Activated T-helper 1 cell treated with anti-CD3 and anti-CD28 coated beads, Interleukin-12 subunit alpha, Interleukin-12 subunit beta, Interleukin-2, Interleukin-4 antibody, amounts not matched to agents 30 ng/mL and 10 ng/mL and 1 ng/mL, durations not matched to agents 14 hours and 24 hours and 36 hours (primary cell): ENCODE measurements at regions of chr11 and their contacts with region 1.

Region 1: GRCh38 chr11:61061081-61061826 is 41.0 kb upstream of the CD5 start:
- DNase-seq: peak; percentile 76
- H3K4me3 Mint-ChIP-seq: peak overlapping the region; percentile 70
- H3K27ac Mint-ChIP-seq: peak overlapping the region; percentile 88
- H3K4me1 Mint-ChIP-seq: peaks cover 77% of the 10 kb centered on the region
- H3K27me3 Mint-ChIP-seq: no peaks in the 10 kb centered on the region

Region 2: DNA sequence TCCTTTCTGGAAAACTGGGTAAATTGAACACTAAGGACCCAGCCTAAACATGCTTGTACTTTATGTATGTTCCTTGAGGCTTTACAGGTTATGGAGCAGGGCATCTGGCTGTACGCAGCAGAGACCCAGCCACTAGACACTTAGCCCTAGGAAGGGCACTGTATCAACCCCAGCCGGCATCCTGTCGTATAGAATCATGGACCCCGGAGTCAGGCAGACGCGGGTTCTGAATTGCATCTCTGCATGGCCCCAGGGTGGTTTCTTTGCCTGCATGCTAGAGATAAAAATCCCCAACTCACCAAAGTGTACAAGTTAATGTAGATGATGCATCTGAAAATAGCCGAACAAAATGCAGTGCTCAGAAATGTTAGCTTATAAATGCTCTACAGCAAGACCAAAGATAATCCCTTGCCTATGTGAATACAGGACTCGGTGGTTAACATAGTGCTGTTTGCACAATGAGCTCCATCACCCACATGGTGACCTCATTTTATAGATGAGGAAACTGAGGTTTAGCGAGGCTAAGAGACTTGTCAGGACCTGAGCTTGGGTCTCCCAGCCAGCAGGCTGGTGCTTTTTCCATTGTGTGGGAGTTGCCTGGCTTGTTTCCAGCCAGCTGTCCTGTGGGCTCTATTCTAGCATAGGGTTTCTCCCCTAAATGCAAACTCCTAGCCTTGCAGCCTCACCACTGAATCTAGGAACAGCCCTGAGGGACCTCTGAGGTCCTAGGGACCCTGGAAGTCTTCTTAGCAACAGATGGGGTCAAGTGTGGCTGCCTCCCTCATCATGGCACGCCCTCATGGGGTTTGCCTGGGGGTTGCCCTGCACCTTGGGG is 82.5 kb before region 1 on chr11:
- intact Hi-C with region 1: loop called (anchors 2 kb)
- DNase-seq: peak; percentile 54
- H3K4me3 Mint-ChIP-seq: peak overlapping the region; percentile 86
- H3K27ac Mint-ChIP-seq: peak overlapping the region; percentile 92
- H3K4me1 Mint-ChIP-seq: peaks cover 87% of the 10 kb centered on the region
- H3K27me3 Mint-ChIP-seq: no peaks in the 10 kb centered on the region

Region 3: GRCh38 chr11:61021661-61022212 is 39.5 kb before region 1 on chr11:
- intact Hi-C with region 1: loop called (anchors 1 kb)
- DNase-seq: peak; percentile 78
- H3K4me3 Mint-ChIP-seq: peak overlapping the region; percentile 66
- H3K27ac Mint-ChIP-seq: peak overlapping the region; percentile 89
- H3K4me1 Mint-ChIP-seq: peaks cover 65% of the 10 kb centered on the region
- H3K27me3 Mint-ChIP-seq: no peaks in the 10 kb centered on the region

Region 4: GRCh38 chr11:61083601-61084147 is 22.4 kb after region 1 on chr11:
- intact Hi-C with region 1: loop called (anchors 2 kb)
- DNase-seq: peak; percentile 75
- H3K4me3 Mint-ChIP-seq: peak overlapping the region; percentile 88
- H3K27ac Mint-ChIP-seq: peak overlapping the region; percentile 99
- H3K4me1 Mint-ChIP-seq: peaks cover 67% of the 10 kb centered on the region
- H3K27me3 Mint-ChIP-seq: no peaks in the 10 kb centered on the region

Region 5: GRCh38 chr11:61111786-61112517 is 50.7 kb after region 1 on chr11:
- intact Hi-C with region 1: loop called (anchors 1 kb)
- DNase-seq: peak; percentile 70
- H3K4me3 Mint-ChIP-seq: peak overlapping the region; percentile 84
- H3K27ac Mint-ChIP-seq: peak overlapping the region; percentile 89
- H3K4me1 Mint-ChIP-seq: peaks cover 99% of the 10 kb centered on the region
- H3K27me3 Mint-ChIP-seq: no peaks in the 10 kb centered on the region

Region 6: DNA sequence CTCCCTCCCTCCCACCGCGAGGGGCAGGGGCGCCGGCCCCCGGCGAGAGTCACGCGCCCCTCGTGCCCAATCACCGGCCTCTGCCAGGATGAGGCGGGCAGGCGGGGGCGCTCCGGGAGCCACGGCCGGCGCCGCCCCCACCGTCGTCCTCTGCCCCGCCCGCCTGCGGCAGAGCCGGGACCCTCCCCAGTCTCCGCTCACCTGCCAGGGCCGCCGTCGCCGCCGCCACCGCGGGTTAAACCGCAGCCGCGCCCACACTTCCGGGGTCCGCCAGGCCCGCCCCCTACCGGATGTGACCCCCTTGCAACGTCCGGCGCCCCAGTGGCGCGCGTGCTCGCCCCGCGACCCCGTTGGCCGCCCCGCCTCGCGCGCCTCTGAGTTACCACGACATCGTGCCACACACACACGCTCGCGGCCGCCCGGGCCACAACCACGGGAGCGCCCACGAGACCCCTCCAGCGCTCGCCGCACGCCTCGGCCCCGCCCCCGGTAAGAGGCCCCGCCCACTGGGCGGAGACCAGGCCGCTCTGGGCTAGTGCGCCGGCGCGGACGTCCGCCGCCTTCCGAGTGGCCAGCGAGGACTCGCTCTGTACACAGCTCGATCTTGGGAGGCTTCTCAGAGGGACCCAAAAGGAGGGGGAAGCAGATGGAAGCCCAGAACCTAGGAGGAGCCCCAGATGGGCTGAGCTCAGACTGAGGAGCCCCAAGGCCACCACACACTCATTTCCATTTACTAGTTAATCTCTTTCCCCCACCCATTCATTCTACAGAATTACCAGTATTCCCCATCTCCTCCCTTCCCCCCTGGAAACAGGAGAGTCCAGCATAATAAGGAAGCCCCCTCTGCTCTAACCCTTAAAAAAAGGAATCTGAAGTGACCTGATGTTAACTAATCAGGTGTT is 100.2 kb after region 1 on chr11 and contains the start of gene VPS37C:
- intact Hi-C with region 1: loop called (anchors 1 kb)
- DNase-seq: peak; percentile 89
- H3K4me3 Mint-ChIP-seq: peak within 1 kb of the TSS; percentile 89
- H3K27ac Mint-ChIP-seq: peak within 1 kb of the TSS; percentile 91
- H3K4me1 Mint-ChIP-seq: peaks cover 60% of the 10 kb centered on the region
- H3K27me3 Mint-ChIP-seq: no peaks in the 10 kb centered on the region
- total RNA-seq, gene VPS37C: 11.5 and 11.6 TPM in 2 replicates

Region 7: DNA sequence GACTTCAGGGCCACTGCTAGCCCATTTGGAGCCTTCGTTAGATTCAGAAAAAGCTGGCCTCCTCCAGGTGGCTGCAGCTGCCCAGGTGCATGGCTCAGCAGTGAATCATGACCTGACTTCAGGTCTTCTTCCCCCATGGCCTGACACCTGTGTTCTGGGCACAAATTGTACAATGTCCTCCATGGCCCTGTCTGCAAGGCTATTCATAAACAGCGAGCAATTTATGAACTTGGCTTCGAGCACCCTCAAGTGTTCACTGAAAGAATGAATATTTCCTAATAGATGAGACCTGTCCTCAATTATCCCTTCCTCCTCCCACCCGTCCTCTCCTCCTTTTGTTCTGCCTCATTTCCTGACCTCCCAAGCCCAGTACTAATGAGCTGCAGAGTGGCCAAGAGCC is 112.2 kb after region 1 on chr11:
- intact Hi-C with region 1: no loop called
- DNase-seq: no peak
- H3K4me3 Mint-ChIP-seq: no peak overlapping the region
- H3K27ac Mint-ChIP-seq: no peak overlapping the region
- H3K4me1 Mint-ChIP-seq: peaks cover 12% of the 10 kb centered on the region
- H3K27me3 Mint-ChIP-seq: peaks cover 16% of the 10 kb centered on the region